HepG2 (cell line): ENCODE measurements at regions of chrX and their contacts with region 1.

Region 1: GRCh38 chrX:48493890-48494364 is 14.9 kb upstream of the PORCN start:
- DNase-seq: peak; percentile 55
- ATAC-seq: peak; percentile 79
- H3K4me3 ChIP-seq: no peak overlapping the region
- H3K27ac ChIP-seq: no peak overlapping the region
- H3K4me1 ChIP-seq: peaks cover 26% of the 10 kb centered on the region
- H3K27me3 ChIP-seq: no peaks in the 10 kb centered on the region; a peak in 1 of 5 replicates
- CTCF ChIP-seq: peak; percentile 83
- EP300 ChIP-seq: no peak
- POLR2A ChIP-seq: no peak
- RAD21 ChIP-seq: peak; percentile 58

Region 2: DNA sequence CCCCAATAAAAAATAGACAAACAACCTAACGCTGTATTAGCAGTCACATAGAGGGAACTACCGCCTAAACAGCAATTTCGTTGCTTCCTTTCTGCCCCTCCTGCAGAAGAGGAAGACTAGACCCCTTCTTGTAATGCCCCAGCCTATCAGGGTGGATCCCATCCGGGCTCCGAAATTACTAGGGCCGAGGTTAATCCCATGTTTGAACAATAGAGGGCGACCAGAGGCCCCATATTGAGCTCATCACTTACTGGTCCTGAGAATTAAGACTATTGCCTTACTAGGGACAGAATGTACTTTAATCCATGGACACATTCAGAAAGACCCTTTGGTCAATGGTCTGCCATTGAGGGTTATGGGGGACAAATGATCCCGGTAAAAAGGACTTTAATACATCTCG is 410.7 kb before region 1 on chrX:
- CTCF ChIA-PET with region 1: interaction called, 3 read pairs
- POLR2A ChIA-PET with region 1: interaction called, 3 read pairs
- in situ Hi-C with region 1: loop called (anchors 5 kb)
- intact Hi-C with region 1: loop called (anchors 10 kb)
- DNase-seq: peak; percentile 6
- ATAC-seq: peak; percentile 65; the same call in 2 of the 3 replicates
- H3K4me3 ChIP-seq: no peak overlapping the region
- H3K27ac ChIP-seq: no peak overlapping the region
- H3K4me1 ChIP-seq: no peaks in the 10 kb centered on the region
- H3K27me3 ChIP-seq: no peaks in the 10 kb centered on the region
- CTCF ChIP-seq: peak; percentile 57
- EP300 ChIP-seq: no peak
- POLR2A ChIP-seq: no peak
- RAD21 ChIP-seq: no peak

Region 3: DNA sequence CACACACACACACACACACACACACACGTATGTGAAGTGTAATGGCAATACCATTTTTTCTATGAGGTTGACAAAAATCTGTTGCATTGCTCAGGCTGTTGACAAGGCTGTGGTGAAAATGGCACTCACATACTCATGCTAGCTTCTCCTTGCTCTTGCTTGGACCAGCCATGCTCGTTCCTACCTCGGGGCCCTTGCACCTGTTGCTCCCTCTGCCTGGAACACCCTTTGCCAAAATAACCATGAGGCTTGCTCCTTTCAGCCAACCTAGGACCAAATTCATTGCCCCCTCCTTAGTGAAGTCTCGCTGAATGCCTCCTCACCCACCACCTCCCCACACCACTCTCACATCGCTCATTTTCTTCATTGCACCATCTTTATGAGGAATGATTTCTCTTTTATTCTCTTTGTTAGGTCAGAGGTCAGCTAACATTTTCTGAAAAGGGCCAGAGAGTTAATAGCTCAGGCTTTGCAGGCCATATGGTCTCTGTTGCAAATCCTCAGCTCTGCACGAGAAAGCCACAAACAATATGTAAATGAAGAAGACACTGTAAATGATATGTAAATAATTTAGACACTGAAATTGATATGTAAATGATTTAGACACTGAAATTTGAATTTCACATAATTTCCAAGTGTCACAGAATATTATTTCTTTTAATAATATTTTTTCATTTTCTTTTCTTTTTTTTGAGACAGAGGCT is 37.1 kb before region 1 on chrX:
- CTCF ChIA-PET with region 1: no interaction called
- POLR2A ChIA-PET with region 1: no interaction called
- in situ Hi-C with region 1: no loop called
- intact Hi-C with region 1: no loop called
- DNase-seq: no peak
- ATAC-seq: no peak
- H3K4me3 ChIP-seq: no peak overlapping the region
- H3K27ac ChIP-seq: no peak overlapping the region
- H3K4me1 ChIP-seq: no peaks in the 10 kb centered on the region
- H3K27me3 ChIP-seq: no peaks in the 10 kb centered on the region
- CTCF ChIP-seq: no peak
- EP300 ChIP-seq: no peak
- POLR2A ChIP-seq: no peak
- RAD21 ChIP-seq: no peak

Region 4: DNA sequence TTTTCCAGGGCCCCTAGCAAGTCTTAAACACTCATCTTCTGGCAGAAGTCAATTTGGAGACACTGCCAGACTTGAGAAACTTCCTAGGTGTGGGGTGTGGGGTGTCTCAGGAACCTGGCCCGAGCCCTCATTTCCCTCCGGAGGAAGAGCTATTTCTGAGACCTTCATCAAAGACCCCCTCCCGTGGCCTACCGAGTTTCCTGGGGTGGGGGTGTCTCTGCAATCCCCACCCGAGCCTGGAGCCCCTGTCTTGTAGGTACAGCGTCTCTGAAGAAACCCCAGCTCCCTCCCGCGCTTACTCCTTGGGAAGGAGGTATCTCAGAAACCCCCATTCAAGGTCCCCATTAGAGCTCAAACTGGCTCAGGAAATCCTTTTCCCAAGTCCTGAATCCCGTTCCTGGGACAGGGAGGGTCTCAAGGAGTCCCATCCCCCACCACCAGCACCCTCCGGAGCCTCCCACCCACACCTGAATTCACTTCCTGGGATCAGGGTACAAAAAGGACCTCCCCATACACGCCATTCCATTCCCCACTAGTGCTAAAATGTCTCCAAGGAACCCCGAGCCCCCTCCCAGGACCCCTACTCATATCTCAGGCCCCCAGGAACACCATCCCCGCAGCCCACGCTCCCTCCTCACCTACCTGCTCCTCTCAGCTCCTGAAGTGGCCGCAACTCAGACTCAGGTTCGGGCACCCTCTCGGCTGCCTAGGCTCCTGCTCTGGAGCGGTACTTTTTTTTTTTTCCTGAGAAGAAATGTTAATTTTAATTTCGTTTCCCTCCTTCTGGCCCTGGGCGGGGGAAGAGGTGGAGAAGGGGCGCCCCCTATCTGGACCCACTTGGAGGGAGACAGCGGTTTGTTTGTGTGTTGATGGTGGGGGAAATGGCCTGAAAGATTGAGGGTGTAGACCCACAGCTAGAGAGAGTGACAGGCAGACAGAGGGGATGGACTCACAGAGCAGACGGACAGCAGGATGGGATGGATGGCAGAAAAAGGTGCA is 24.9 kb before region 1 on chrX:
- CTCF ChIA-PET with region 1: interaction called, 4 read pairs
- POLR2A ChIA-PET with region 1: interaction called, 16 read pairs
- in situ Hi-C with region 1: no loop called
- intact Hi-C with region 1: no loop called
- DNase-seq: no peak
- ATAC-seq: peak; percentile 13
- H3K4me3 ChIP-seq: peak overlapping the region; percentile 63 to 74 (median 74)
- H3K27ac ChIP-seq: peak overlapping the region; percentile 67
- H3K4me1 ChIP-seq: peaks cover 65% of the 10 kb centered on the region
- H3K27me3 ChIP-seq: no peaks in the 10 kb centered on the region; a peak in 1 of 5 replicates
- CTCF ChIP-seq: peak; percentile 58
- EP300 ChIP-seq: no peak
- POLR2A ChIP-seq: no peak
- RAD21 ChIP-seq: no peak